ENCODE measurements at regions of chr14 and their contacts with region 1.

Region 1: DNA sequence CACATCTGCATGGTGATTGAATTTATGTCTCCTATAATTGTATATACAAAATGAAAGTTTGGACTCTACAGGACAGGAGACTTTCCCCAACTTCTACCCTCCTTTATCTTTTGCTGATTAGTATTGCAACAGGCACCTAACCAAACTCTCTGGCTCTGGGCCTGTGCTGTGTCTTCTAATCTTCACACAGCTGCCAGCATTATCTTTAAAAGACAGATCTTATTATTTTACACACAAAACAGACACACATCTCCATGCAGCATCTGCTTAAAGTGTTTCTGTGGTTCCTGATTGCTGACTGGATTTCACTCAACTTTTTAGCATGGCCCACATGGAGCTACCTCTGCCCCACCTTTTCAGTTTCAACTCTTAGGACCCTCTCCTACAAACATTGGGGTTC is 154.9 kb upstream of the PELI2 start:
- DNase-seq: no peak
- H3K4me3 ChIP-seq: no peak overlapping the region
- H3K27ac ChIP-seq: no peak overlapping the region
- H3K4me1 ChIP-seq: no peaks in the 10 kb centered on the region
- H3K27me3 ChIP-seq: no peaks in the 10 kb centered on the region
- CTCF ChIP-seq: no peak
- POLR2A ChIP-seq: no peak

Region 2: DNA sequence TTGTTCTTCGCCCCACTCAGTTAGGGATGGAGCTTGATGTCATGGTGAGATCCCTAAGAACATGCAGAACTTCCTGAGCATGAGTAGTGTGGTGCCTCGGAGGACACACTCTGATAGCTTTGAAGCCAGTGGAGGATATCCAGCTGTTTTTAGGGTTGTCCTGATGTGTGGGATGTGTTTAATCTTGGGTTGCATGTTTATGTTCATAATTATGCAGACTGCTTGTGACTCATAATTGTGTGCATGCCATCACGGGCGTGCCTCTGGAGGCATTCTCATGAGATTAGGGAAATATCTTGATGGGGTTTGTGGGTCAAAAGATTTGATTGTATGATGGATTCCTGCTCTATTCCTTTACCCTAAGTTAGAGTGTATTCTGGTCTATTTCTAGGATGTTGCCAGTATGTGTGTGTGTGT is 112.5 kb before region 1 on chr14:
- intact Hi-C with region 1: no loop called
- DNase-seq: no peak
- H3K4me3 ChIP-seq: no peak overlapping the region
- H3K27ac ChIP-seq: no peak overlapping the region
- H3K4me1 ChIP-seq: no peaks in the 10 kb centered on the region
- H3K27me3 ChIP-seq: no peaks in the 10 kb centered on the region
- CTCF ChIP-seq: no peak
- POLR2A ChIP-seq: no peak

Region 3: DNA sequence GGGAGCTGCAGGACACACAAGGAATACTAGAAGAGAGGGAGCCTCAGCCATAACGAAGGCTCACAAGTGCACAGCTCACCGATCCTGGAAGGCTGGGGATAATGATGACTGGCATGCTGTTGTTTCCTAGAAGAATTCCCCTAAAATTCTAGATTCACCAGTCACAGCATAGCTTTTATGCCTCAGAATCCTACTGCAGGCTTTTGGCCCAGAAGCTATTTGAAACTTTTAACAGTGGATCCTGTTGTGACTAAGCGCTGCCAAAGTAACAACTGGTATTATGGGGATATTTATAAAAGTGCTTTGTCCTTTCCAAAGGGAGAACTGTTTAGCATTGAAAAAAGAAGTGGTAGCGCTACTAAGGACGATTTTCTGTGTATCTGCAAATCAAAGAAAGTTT is 59.2 kb before region 1 on chr14:
- intact Hi-C with region 1: loop called (anchors 2 kb)
- DNase-seq: no peak
- H3K4me3 ChIP-seq: no peak overlapping the region
- H3K27ac ChIP-seq: no peak overlapping the region
- H3K4me1 ChIP-seq: no peaks in the 10 kb centered on the region
- H3K27me3 ChIP-seq: no peaks in the 10 kb centered on the region
- CTCF ChIP-seq: no peak
- POLR2A ChIP-seq: no peak